Naive thymus-derived CD8-positive, alpha-beta T cell (primary cell): ENCODE measurements at regions of chr14 and their contacts with region 1.

Region 1: GRCh38 chr14:24160850-24161804 is at the start of gene IRF9:
- DNase-seq: peak; percentile 94 to 99 (median 97)
- ATAC-seq: peak; percentile 89 to 90
- H3K4me3 Mint-ChIP-seq: peak within 1 kb of the TSS; percentile 95 to 100 (median 98)
- H3K27ac Mint-ChIP-seq: peak within 1 kb of the TSS; percentile 92 to 100 (median 99)
- H3K4me1 Mint-ChIP-seq: peaks cover 27 to 64% (median 55%) of the 10 kb centered on the region in 4 donors
- H3K27me3 Mint-ChIP-seq: peaks cover 0 to 2% (median 0%) of the 10 kb centered on the region in 5 donors
- polyA plus RNA-seq, gene IRF9: 46.6 to 68.6 (median 51.3) TPM

Region 2: DNA sequence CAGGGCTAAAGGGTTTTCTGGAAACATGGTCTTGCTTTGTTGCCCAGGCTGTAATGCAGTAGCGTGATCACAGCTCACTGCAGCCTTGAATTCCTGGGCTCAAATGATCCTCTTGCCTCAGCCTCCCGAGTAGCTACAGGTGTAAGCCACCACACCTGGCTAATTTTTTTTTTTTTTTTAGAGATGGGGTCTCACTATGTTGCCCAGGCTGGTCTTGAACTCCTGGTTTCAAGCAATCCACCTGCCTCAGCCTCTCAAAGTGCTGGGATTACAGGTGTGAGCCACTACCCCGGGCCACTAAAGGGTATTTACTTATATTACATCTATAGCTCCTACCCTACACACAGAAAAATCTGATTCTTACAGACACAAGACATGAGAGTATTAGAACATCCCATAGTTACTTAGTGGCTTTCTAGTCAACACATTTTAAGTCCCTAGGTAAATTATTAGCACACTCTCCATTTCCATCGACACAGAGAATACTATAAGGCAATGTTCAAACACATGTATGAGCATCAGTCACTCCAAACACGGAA is 52.7 kb before region 1 on chr14:
- POLR2A ChIA-PET with region 1: interaction called, 51 read pairs
- DNase-seq: no peak
- ATAC-seq: peak; percentile 31 to 32
- H3K4me3 Mint-ChIP-seq: peak overlapping the region in 8 of 10 donors; percentile 2 to 57 (median 32)
- H3K27ac Mint-ChIP-seq: peak overlapping the region; percentile 83 to 98 (median 94)
- H3K4me1 Mint-ChIP-seq: peaks cover 5 to 24% (median 11%) of the 10 kb centered on the region in 4 donors
- H3K27me3 Mint-ChIP-seq: no peaks in the 10 kb centered on the region

Region 3: DNA sequence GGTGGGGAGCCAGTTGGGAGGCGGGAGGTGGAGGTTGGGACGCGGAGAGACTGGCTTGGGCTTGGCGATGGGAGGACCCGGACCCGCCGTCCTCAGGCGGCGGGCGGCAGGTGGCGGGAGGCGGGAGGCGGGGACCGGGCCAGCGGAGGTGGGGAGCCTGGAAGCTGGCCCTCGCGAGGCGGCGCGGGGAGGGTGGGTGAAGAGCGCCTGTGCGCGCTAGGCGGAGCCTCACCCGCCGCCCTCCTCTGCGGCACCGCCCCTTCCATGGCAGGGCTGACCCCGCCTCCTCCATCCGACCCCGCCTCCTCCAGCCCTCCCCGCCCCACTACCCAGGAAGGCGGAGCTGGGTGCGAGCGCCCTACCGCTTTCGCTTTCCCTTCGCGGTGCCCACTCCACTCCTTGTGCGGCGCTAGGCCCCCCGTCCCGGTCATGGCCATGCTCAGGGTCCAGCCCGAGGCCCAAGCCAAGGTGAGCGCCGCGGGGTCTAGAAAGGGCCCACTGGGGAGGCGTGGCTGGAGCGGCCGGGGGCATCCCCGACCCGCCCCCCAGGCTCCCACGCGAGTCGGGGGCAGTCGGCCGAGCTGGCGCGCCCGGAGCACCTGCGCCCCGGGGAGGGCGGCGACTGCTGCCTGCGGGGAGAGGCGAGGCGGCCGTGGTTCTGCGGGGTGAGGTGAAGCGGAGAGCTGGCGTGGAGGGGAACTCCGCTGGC is 25.1 kb before region 1 on chr14 and contains the start of gene PSME1:
- POLR2A ChIA-PET with region 1: interaction called, 23 read pairs
- DNase-seq: peak; percentile 88 to 96 (median 94)
- ATAC-seq: peak; percentile 88 to 94
- H3K4me3 Mint-ChIP-seq: peak within 1 kb of the TSS; percentile 87 to 98 (median 93)
- H3K27ac Mint-ChIP-seq: peak within 1 kb of the TSS; percentile 86 to 97 (median 94)
- H3K4me1 Mint-ChIP-seq: peaks cover 34 to 69% (median 66%) of the 10 kb centered on the region in 4 donors
- H3K27me3 Mint-ChIP-seq: no peaks in the 10 kb centered on the region
- polyA plus RNA-seq, gene PSME1: 681 to 767 (median 753) TPM

Region 4: GRCh38 chr14:24146978-24147760 is 14.0 kb before region 1 on chr14 and contains the start of gene RNF31:
- POLR2A ChIA-PET with region 1: interaction called, 55 read pairs
- DNase-seq: peak; percentile 91 to 98 (median 96)
- ATAC-seq: peak; percentile 87 to 90
- H3K4me3 Mint-ChIP-seq: peak within 1 kb of the TSS; percentile 94 to 100 (median 98)
- H3K27ac Mint-ChIP-seq: peak within 1 kb of the TSS; percentile 91 to 99 (median 96)
- H3K4me1 Mint-ChIP-seq: peaks cover 22 to 71% (median 69%) of the 10 kb centered on the region in 4 donors
- H3K27me3 Mint-ChIP-seq: no peaks in the 10 kb centered on the region
- polyA plus RNA-seq, gene RNF31: 34.1 to 45.3 (median 37.6) TPM

Region 5: GRCh38 chr14:24188251-24189058 is 27.3 kb after region 1 on chr14 and contains the start of gene IPO4:
- POLR2A ChIA-PET with region 1: interaction called, 27 read pairs
- DNase-seq: peak; percentile 85 to 98 (median 94)
- ATAC-seq: peak; percentile 90 to 97
- H3K4me3 Mint-ChIP-seq: peak within 1 kb of the TSS; percentile 80 to 95 (median 90)
- H3K27ac Mint-ChIP-seq: peak within 1 kb of the TSS; percentile 83 to 97 (median 94)
- H3K4me1 Mint-ChIP-seq: peaks cover 14 to 61% (median 44%) of the 10 kb centered on the region in 4 donors
- H3K27me3 Mint-ChIP-seq: peaks cover 0 to 2% (median 0%) of the 10 kb centered on the region in 5 donors
- polyA plus RNA-seq, gene IPO4: 20.2 to 27.5 (median 21.1) TPM